OCI-LY7 (cell line): ENCODE measurements at regions of chr7 and their contacts with region 1.

Region 1: DNA sequence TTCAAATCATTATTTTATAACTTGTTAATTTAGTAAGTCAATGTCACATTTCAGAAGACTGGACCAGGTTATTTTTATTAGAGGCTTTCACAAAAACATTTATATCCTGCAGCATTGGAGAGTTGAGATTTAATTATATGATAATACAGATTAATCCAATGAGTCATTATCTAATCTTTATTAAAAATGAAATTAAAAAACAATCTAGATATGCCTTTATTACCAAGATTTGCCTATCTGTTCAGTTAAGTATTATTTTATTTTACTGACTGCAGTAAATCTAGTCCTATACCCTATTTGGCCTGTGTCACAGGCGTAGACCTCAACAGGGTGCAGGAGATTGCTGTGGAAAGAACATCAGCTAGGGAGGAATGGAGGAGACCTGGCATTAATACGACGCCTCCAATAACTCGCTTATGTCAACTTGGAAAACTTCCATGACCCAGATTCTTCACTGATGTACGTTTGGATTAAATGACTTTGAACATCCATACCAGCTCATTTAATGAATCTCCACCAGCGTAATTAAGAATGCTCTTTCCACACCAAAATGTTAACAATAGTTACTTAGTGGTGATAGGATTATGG is 18.2 kb downstream of the PAXIP1 start:
- DNase-seq: no peak
- H3K4me3 ChIP-seq: no peak overlapping the region
- H3K27ac ChIP-seq: no peak overlapping the region
- H3K4me1 ChIP-seq: no peaks in the 10 kb centered on the region
- CTCF ChIP-seq: no peak

Region 2: GRCh38 chr7:154729056-154729455 is 255.6 kb before region 1 on chr7:
- CTCF ChIA-PET with region 1: no interaction called
- POLR2A ChIA-PET with region 1: no interaction called
- intact Hi-C with region 1: no loop called
- DNase-seq: no peak
- H3K4me3 ChIP-seq: no peak overlapping the region
- H3K27ac ChIP-seq: no peak overlapping the region
- H3K4me1 ChIP-seq: no peaks in the 10 kb centered on the region
- CTCF ChIP-seq: no peak

Region 3: GRCh38 chr7:154947604-154948003 is 37.1 kb before region 1 on chr7:
- CTCF ChIA-PET with region 1: no interaction called
- POLR2A ChIA-PET with region 1: interaction called, 3 read pairs
- intact Hi-C with region 1: loop called (anchors 5 kb)
- DNase-seq: no peak
- H3K4me3 ChIP-seq: no peak overlapping the region
- H3K27ac ChIP-seq: no peak overlapping the region
- H3K4me1 ChIP-seq: no peaks in the 10 kb centered on the region
- CTCF ChIP-seq: no peak